ENCODE measurements at regions of chr1 and their contacts with region 1.

Region 1: GRCh38 chr1:159854693-159855192 is 7.7 kb downstream of the VSIG8 start:
- DNase-seq: peak in 1 of 2 experiments; percentile 63
- H3K4me3 ChIP-seq: peak overlapping the region; percentile 49
- H3K4me3 Mint-ChIP-seq: peak overlapping the region; percentile 68
- H3K27ac Mint-ChIP-seq: no peak overlapping the region
- H3K4me1 ChIP-seq: no peaks in the 10 kb centered on the region
- H3K4me1 Mint-ChIP-seq: peaks cover 7% of the 10 kb centered on the region
- H3K27me3 ChIP-seq: no peaks in the 10 kb centered on the region; the same call in 1 of the 2 replicates
- H3K27me3 Mint-ChIP-seq: peaks cover 5% of the 10 kb centered on the region
- CTCF ChIP-seq: no peak

Region 2: GRCh38 chr1:159040893-159041724 is 813.6 kb before region 1 on chr1:
- CTCF ChIA-PET with region 1: no interaction called
- POLR2A ChIA-PET with region 1: no interaction called
- intact Hi-C with region 1: no loop called
- DNase-seq: no peak
- H3K4me3 ChIP-seq: no peak overlapping the region
- H3K4me3 Mint-ChIP-seq: no peak overlapping the region
- H3K27ac Mint-ChIP-seq: no peak overlapping the region
- H3K4me1 ChIP-seq: no peaks in the 10 kb centered on the region
- H3K4me1 Mint-ChIP-seq: no peaks in the 10 kb centered on the region
- H3K27me3 ChIP-seq: no peaks in the 10 kb centered on the region
- H3K27me3 Mint-ChIP-seq: no peaks in the 10 kb centered on the region
- CTCF ChIP-seq: no peak

Region 3: GRCh38 chr1:159908031-159908940 is 53.5 kb after region 1 on chr1:
- CTCF ChIA-PET with region 1: no interaction called
- POLR2A ChIA-PET with region 1: no interaction called
- intact Hi-C with region 1: loop called (anchors 5 kb)
- DNase-seq: no peak
- H3K4me3 ChIP-seq: no peak overlapping the region
- H3K4me3 Mint-ChIP-seq: peak overlapping the region; percentile 59
- H3K27ac Mint-ChIP-seq: peak overlapping the region; percentile 37
- H3K4me1 ChIP-seq: peaks cover 83% of the 10 kb centered on the region
- H3K4me1 Mint-ChIP-seq: peaks cover 53% of the 10 kb centered on the region
- H3K27me3 ChIP-seq: no peaks in the 10 kb centered on the region
- H3K27me3 Mint-ChIP-seq: no peaks in the 10 kb centered on the region
- CTCF ChIP-seq: no peak